ENCODE measurements at regions of chr10 and their contacts with region 1.

Region 1: DNA sequence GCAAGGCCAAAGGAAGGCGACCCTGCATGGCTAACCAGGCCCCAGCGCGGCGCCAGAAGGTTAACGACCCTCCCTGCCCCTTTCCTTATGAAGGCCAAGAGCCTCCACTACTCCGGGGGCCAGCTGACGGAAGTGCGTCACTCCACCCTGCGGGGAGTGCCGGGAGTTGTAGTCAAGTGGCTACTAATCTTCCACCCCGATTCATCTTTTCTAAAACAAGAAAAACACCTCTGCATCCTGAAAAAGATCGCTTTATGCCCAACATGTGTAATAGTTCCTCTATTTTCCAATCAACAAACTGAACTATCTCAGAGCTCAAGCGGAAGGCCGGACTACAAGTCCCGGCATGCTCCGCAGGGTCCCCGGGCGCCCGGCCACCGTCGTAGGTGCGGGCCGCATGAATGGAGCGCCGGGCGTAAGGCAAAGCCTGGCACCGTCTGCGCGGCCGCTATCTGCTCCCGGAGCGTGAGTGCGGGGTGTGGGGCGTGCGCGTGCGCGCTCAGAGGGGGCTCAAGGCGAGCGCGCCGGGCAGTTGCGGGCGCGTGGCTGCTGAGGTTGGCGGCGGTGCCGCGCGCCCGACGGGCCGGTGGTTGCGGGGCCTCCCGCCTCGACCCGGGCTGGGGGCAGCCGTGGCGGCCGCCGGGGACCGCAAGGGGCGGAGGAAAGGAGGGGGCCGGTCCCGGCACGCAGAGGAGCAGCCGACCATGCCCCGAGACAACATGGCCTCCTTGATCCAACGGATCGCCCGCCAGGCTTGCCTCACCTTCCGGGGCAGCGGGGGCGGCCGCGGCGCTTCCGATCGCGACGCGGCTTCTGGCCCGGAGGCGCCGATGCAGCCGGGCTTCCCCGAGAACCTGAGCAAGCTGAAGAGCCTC is at the start of gene ADO:
- DNase-seq: peak; percentile 81
- ATAC-seq: peak; percentile 83
- H3K4me3 Mint-ChIP-seq: peak within 1 kb of the TSS; percentile 98
- H3K27ac Mint-ChIP-seq: peak within 1 kb of the TSS; percentile 100
- H3K4me1 Mint-ChIP-seq: peaks cover 32% of the 10 kb centered on the region
- H3K27me3 Mint-ChIP-seq: peaks cover 14% of the 10 kb centered on the region
- total RNA-seq, gene ADO: 23.2 to 23.3 TPM

Region 2: GRCh38 chr10:62637249-62638061 is 167.1 kb before region 1 on chr10:
- POLR2A ChIA-PET with region 1: interaction called, 22 read pairs
- DNase-seq: peak; percentile 64
- ATAC-seq: peak; percentile 93
- H3K4me3 Mint-ChIP-seq: no peak overlapping the region
- H3K27ac Mint-ChIP-seq: no peak overlapping the region
- H3K4me1 Mint-ChIP-seq: peaks cover 1% of the 10 kb centered on the region
- H3K27me3 Mint-ChIP-seq: no peaks in the 10 kb centered on the region

Region 3: GRCh38 chr10:62788861-62789467 is 15.6 kb before region 1 on chr10:
- POLR2A ChIA-PET with region 1: no interaction called
- DNase-seq: no peak
- ATAC-seq: no peak
- H3K4me3 Mint-ChIP-seq: no peak overlapping the region
- H3K27ac Mint-ChIP-seq: no peak overlapping the region
- H3K4me1 Mint-ChIP-seq: no peaks in the 10 kb centered on the region
- H3K27me3 Mint-ChIP-seq: peaks cover 20% of the 10 kb centered on the region

Region 4: DNA sequence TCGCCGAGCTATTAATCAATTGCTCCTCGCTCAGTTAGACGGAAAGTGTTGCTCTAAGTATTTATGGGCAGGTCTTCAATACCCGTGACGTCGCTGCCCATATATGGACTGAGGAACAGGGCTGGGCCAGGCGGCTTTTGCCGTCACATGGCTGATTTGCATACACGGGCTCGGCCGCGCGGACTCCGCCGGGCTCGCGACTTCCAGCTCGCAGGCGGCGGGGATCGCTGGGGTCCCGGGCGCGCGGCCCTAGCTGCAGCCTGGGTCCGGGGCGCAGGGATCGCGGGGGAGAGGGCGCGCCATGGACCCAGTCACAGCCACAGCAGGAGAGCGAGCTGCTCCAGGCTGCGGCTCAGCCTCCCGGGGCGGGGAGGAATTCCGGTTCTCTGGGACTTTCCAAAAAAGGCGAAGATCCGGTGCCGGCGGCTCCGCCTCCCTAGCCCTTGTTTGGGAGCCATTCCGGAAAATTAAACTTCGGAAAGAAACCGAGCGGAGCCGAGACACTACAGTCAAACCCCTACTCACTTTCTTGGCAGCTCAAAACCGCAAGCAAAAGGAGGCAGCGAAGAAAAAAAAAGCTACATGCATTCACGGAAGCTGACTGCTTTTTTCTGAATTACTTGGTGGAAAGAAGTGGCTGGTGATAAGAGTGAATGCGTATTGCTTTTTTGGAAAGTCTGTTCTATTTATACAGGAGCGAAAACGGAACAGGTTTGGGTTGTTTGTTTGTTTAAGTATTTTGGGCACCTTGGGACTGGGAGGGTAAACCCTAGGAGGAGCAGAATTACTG is 11.9 kb after region 1 on chr10 and contains the start of gene EGR2:
- POLR2A ChIA-PET with region 1: interaction called, 73 read pairs
- DNase-seq: peak; percentile 93
- ATAC-seq: peak; percentile 82
- H3K4me3 Mint-ChIP-seq: peak within 1 kb of the TSS; percentile 92
- H3K27ac Mint-ChIP-seq: peak within 1 kb of the TSS; percentile 97
- H3K4me1 Mint-ChIP-seq: peaks cover 27% of the 10 kb centered on the region
- H3K27me3 Mint-ChIP-seq: peaks cover 50% of the 10 kb centered on the region
- total RNA-seq, gene EGR2: 1.4 to 2.2 TPM

Region 5: DNA sequence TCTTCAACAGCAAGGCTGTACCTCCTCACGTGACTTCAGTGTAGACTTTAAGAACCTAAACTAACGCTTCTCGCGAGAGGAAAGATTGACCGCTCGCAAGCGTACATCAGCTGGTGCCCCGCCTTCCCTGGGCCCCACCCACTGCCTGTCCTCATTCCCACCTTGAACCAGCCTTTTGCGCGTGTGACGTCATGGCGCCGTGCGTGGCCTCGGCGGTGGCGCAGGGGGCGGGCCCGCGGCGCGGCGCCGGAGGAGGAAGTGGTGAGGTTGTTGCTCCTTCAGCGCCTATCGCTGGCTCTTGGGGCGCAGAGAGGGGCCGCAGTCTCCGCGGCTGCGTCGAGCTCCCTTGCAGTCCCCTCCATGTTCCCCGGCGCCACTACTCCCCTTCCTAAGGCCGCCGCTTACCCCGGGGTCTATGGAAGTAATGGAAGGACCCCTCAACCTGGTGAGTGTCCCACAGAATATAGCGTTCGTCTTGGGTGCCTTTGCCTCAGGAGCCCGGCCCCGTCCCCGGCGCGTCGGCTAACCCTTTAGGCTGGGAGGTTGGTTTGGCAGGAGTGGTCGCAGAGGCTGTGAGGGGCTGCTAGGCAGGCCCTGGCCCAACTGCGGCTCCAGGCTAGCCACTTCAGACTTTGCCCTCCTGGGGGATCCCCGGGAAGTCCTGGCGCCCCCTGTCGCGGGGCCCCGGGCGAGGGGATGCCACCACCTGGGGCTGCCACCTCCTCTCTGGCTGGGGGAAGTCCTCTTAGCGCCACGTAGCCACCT is 328.6 kb after region 1 on chr10 and contains the start of gene NRBF2:
- POLR2A ChIA-PET with region 1: interaction called, 11 read pairs
- DNase-seq: peak; percentile 98
- ATAC-seq: peak; percentile 96
- H3K4me3 Mint-ChIP-seq: peak within 1 kb of the TSS; percentile 96
- H3K27ac Mint-ChIP-seq: peak within 1 kb of the TSS; percentile 98
- H3K4me1 Mint-ChIP-seq: peaks cover 24% of the 10 kb centered on the region
- H3K27me3 Mint-ChIP-seq: peaks cover 4% of the 10 kb centered on the region
- total RNA-seq, gene NRBF2: 24.1 to 24.7 TPM

Measured in activated naive CD8-positive, alpha-beta T cell treated with anti-CD3 and anti-CD28 coated beads, Interleukin-2, amount 10 ng/mL, durations not matched to agents 7 days and 5 days (primary cell).